ENCODE measurements at regions of chr1 and their contacts with region 1.

Region 1: GRCh38 chr1:160607011-160607671 is 27.8 kb upstream of the CD84 start:
- DNase-seq: peak; percentile 76
- H3K4me3 Mint-ChIP-seq: no peak overlapping the region
- H3K27ac Mint-ChIP-seq: peak overlapping the region; percentile 77
- H3K4me1 Mint-ChIP-seq: peaks cover 45% of the 10 kb centered on the region
- H3K27me3 Mint-ChIP-seq: no peaks in the 10 kb centered on the region

Region 2: GRCh38 chr1:160428655-160429054 is 178.5 kb before region 1 on chr1:
- CTCF ChIA-PET with region 1: interaction called, 82 read pairs
- DNase-seq: peak; percentile 53
- H3K4me3 Mint-ChIP-seq: no peak overlapping the region
- H3K27ac Mint-ChIP-seq: peak overlapping the region; percentile 81
- H3K4me1 Mint-ChIP-seq: peaks cover 61% of the 10 kb centered on the region
- H3K27me3 Mint-ChIP-seq: peaks cover 3% of the 10 kb centered on the region

Region 3: GRCh38 chr1:160539990-160540858 is 66.9 kb before region 1 on chr1:
- CTCF ChIA-PET with region 1: interaction called, 308 read pairs
- DNase-seq: peak; percentile 71
- H3K4me3 Mint-ChIP-seq: peak overlapping the region; percentile 43
- H3K27ac Mint-ChIP-seq: peak overlapping the region; percentile 91
- H3K4me1 Mint-ChIP-seq: peaks cover 51% of the 10 kb centered on the region
- H3K27me3 Mint-ChIP-seq: no peaks in the 10 kb centered on the region

Region 4: DNA sequence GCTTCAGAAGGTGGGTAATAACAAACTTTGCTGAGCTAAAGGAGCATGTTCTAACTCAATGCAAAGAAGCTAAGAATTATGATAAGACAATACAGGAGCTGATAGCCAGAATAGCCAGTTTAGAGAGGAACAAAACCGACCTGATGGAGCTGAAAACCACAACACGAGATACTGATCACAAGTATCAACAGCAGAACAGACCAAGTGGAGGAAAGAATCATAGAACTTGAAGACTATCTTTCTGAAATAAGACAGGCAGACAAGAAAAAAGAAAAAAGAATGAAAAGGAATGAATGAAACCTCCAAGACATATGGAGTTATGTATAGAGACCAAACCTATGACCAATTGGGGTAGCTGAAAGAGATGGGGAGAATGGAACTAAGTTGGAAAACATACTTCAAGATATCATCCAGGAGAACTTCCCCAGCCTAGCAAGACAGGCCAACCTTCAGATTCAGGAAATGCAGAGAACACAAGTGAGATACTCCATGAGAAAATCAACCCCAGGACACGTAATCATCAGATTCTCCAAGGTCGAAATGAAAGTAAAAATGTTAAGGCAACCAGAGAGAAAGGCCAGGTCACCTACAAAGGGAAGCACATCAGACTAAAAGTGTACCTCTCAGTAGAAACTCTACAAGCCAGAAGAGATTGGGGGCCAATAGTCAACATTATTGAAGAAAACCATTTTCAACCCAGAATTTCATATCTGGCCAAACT is 48.3 kb before region 1 on chr1:
- CTCF ChIA-PET with region 1: interaction called, 308 read pairs
- DNase-seq: no peak
- H3K4me3 Mint-ChIP-seq: no peak overlapping the region
- H3K27ac Mint-ChIP-seq: no peak overlapping the region
- H3K4me1 Mint-ChIP-seq: peaks cover 41% of the 10 kb centered on the region
- H3K27me3 Mint-ChIP-seq: no peaks in the 10 kb centered on the region

Region 5: DNA sequence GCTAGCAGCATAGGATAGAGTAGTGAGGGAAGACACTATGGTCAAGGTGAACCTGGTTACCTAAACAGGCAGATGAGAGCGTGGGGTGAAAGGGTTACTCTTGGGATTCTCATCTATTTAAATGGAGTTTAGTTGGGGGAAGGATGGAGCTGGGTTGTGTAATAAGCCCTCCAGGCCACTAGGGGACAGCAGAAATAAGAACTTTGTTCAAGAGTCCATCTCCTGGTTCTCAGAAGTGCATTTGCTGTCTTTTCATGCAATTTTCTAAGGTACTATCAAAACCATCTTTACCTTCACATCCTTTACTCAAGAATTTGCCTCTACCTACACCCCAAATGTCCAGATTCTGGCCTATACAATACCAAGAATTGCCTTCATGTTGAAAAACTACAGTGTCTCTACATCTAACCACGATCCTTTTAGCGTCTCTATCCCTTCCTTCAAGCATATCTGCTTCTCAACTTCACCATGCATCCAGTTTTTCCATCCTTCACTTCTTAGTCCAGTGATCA is 11.7 kb after region 1 on chr1:
- CTCF ChIA-PET with region 1: interaction called, 23 read pairs
- DNase-seq: peak; percentile 52
- H3K4me3 Mint-ChIP-seq: no peak overlapping the region
- H3K27ac Mint-ChIP-seq: peak overlapping the region; percentile 44
- H3K4me1 Mint-ChIP-seq: peaks cover 72% of the 10 kb centered on the region
- H3K27me3 Mint-ChIP-seq: no peaks in the 10 kb centered on the region

Region 6: GRCh38 chr1:160664573-160665051 is 57.5 kb after region 1 on chr1:
- CTCF ChIA-PET with region 1: no interaction called
- DNase-seq: peak; percentile 68
- H3K4me3 Mint-ChIP-seq: peak overlapping the region; percentile 51
- H3K27ac Mint-ChIP-seq: peak overlapping the region; percentile 92
- H3K4me1 Mint-ChIP-seq: peaks cover 75% of the 10 kb centered on the region
- H3K27me3 Mint-ChIP-seq: no peaks in the 10 kb centered on the region

Measured in activated naive CD4-positive, alpha-beta T cell treated with anti-CD3 and anti-CD28 coated beads, Interleukin-2, amount 10 ng/mL, durations not matched to agents 7 days and 5 days (primary cell).